ENCODE measurements at regions of chr20 and their contacts with region 1.

Region 1: GRCh38 chr20:50399917-50400704 is 110.1 kb upstream of the PTPN1 start:
- DNase-seq: no peak

Region 2: DNA sequence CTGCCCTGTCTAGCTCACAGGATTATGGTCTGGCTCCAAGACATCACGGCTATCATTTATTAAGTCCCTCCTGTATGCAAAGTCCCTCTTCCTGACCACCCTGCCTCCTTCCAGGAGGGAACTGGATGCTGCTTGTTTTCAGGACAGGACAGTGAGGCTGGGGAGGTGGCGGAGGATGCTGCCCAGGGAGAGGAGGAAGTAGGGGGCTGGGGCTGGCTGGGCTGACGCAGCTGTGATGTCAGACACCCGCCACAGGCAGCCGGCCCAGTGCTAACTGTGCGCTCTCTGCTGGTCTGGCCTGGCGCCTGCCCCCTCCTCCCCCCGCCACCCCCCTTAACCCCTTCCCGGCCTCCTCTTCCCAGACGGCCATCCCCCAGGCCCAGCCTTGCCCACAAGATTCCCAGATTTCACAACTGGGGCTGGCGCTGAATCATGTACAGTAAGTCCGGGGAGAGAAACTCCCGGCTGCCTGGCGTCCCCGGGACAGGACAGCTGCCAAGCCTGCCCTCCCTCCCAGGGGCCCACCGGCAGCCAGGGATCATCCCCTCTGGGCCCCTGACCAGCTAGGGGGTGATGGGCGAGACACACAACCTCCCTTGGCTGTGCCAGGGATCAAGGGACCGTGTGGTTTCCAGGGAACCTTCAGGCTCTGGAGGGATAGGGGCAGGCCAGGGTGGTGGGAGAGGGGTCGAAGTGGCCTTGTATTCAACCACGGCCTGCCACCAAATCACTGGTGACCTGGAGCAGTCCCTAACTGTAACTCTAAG is 91.4 kb before region 1 on chr20:
- intact Hi-C with region 1: loop called (anchors 2 kb)
- DNase-seq: peak; percentile 97

Region 3: GRCh38 chr20:50415516-50416113 is 15.5 kb after region 1 on chr20:
- intact Hi-C with region 1: loop called (anchors 1 kb)
- DNase-seq: peak; percentile 97

Region 4: DNA sequence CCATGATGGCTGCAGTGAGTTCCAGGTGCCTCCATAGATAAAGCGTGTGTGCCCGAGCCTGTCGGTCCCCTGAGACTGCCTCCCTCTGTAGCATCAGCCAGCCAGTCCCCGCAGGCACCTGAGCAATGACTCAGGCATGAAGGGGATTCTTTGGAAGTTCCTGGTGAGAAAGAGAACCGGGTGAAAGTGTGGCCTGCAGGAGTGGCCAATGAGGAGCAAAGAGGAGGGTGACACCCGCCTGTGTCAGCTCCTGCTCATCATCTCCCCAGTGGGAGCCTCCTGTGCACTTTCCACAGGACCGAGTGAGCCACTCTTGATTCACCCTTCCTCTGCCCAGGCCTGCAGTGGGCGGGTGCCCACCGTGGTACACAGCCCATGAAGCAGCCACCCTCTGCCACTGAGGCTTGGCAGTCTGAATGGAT is 38.9 kb after region 1 on chr20:
- intact Hi-C with region 1: no loop called
- DNase-seq: no peak

Region 5: DNA sequence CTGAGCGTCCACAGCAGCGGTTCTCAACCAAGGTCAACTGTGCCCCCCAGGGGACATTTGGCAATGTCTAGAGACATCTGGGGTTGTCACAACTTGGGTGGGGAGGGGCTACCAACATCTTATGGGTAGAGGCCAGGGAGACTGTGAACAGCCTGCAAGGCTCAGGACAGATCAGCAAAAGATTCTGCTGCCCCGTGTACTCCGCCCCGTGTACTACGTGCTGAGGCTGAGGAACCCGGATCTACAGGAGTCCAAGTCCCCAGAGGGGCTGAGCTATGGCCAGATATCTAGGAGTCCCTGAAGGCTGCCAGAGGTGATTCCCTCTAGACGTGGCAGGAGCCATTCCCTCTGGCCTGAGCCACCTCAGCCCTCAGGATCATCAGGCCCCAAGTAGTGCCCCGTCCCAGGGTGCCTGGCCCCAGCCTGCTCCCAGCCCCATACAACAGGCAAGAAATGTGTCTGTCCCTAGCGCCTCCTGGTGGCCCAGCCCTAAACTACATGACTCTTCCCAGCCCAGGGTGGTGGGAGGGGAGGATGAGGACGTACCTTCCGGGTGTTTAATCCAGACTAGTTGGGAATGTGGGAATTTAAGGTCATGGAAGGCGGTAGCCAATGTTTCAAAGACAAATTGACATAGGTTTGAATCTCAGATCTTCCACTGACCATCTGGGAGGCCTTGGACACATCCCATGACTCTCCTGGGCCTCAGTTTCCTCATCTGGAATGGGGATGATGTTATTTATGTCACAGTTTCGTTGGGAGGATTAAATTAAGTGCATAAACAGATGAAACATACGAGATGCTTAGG is 60.6 kb after region 1 on chr20:
- intact Hi-C with region 1: loop called (anchors 2 kb)
- DNase-seq: peak; percentile 95

Region 6: GRCh38 chr20:50491926-50492634 is 92.0 kb after region 1 on chr20:
- intact Hi-C with region 1: no loop called
- DNase-seq: no peak